ENCODE measurements at regions of chr11 and their contacts with region 1.

Region 1: GRCh38 chr11:114892381-114893197 is 214.3 kb downstream of the NXPE2 start:
- DNase-seq: peak in 1 of 2 experiments; percentile 83
- H3K4me3 ChIP-seq: no peak overlapping the region
- H3K27ac ChIP-seq: no peak overlapping the region
- H3K4me1 ChIP-seq: peaks cover 0 to 6% (median 4%) of the 10 kb centered on the region in 4 experiments; a peak in 3 of 7 replicates
- H3K27me3 ChIP-seq: no peaks in the 10 kb centered on the region
- CTCF ChIP-seq: peak; percentile 51 to 85 (median 59); a peak in 3 of 4 replicates
- EP300 ChIP-seq: no peak
- POLR2A ChIP-seq: no peak
- RAD21 ChIP-seq: peak; percentile 51 to 56

Region 2: DNA sequence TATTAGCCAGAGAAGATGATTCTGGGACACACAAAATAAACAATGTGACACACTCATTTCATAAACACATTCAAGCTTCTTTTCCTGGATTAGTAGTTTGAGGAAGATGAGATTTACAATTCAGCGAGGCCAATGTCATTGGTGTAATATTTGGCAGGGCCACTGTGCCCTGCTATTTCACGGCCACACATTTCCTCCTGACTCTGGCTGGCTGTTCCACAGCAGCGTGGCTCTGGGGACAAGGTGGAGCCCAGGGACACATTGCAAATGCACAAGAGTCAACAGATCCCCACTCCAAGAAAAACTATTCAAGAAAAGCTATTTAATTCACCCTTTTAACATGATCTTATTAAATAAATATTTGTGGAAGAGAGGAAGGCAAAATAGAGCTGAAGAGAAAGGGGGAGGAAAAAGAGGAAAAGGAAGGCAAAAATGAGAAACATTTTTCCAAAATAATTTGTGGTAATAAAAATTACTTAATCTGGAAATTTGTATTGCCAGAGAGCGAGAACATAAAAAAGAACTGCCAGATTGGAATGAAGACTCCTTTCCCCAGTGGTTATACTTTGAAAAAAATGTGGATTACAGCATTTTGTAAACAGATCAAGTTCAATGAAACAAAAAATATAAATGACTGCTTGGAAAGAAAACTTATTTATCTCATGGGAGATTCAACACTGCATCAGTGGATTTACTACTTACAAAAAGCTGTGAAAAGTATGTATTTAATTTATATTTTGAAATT is 187.1 kb before region 1 on chr11:
- CTCF ChIA-PET with region 1: no interaction called
- POLR2A ChIA-PET with region 1: no interaction called
- DNase-seq: no peak
- H3K4me3 ChIP-seq: no peak overlapping the region
- H3K27ac ChIP-seq: no peak overlapping the region
- H3K4me1 ChIP-seq: no peaks in the 10 kb centered on the region
- H3K27me3 ChIP-seq: no peaks in the 10 kb centered on the region
- CTCF ChIP-seq: no peak
- EP300 ChIP-seq: no peak
- POLR2A ChIP-seq: no peak
- RAD21 ChIP-seq: no peak

Region 3: DNA sequence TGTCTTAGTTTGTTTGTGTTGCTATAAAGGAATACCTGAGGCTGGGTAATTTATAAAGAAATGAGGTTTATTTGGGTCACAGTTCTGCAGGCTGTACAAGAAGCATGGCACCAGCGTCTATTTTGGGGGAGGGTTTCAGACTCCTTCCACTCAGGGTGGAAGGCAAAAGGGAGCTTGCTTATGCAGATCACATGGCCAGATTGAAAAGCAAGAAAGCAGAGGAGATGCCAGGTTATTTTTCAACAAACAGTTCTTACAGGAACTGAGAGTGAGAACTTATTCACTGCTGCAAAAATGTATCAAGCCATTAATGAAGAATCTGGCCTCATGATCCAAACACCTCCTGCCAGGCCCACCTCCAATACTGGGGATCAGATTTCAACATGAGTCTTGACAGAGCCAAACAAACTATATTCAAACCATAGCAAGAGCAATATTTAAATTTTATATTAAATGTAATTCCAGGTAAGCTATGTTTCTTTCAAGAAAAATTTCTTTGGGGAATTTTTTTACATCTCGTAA is 147.4 kb before region 1 on chr11:
- CTCF ChIA-PET with region 1: no interaction called
- POLR2A ChIA-PET with region 1: no interaction called
- DNase-seq: no peak
- H3K4me3 ChIP-seq: no peak overlapping the region
- H3K27ac ChIP-seq: no peak overlapping the region
- H3K4me1 ChIP-seq: no peaks in the 10 kb centered on the region
- H3K27me3 ChIP-seq: no peaks in the 10 kb centered on the region
- CTCF ChIP-seq: no peak
- EP300 ChIP-seq: no peak
- POLR2A ChIP-seq: no peak
- RAD21 ChIP-seq: no peak

Region 4: DNA sequence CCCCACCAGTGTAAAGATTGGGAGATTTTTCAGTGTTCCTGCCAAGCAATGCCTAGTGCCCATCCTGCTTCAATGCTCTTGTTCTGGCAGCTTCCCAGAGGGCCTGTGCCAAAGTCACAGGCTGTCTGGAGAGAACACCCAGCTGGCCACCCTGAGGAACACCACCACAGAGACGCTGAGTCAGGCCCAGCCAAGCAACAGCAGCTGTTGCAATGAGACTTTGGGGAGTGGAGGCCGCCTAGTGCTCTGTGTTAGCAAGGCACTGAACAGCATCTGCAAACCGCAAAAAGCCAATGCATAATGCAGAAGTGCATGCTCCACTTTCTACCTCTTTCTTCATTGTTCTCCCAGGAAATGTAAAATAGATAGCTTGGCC is 46.2 kb before region 1 on chr11:
- CTCF ChIA-PET with region 1: interaction called, 15 read pairs
- POLR2A ChIA-PET with region 1: no interaction called
- DNase-seq: no peak
- H3K4me3 ChIP-seq: no peak overlapping the region
- H3K27ac ChIP-seq: no peak overlapping the region
- H3K4me1 ChIP-seq: peaks cover 0 to 9% (median 4%) of the 10 kb centered on the region in 4 experiments; a peak in 4 of 7 replicates
- H3K27me3 ChIP-seq: no peaks in the 10 kb centered on the region
- CTCF ChIP-seq: no peak
- EP300 ChIP-seq: no peak
- POLR2A ChIP-seq: no peak
- RAD21 ChIP-seq: peak in 1 of 2 experiments; percentile 27; a peak in 1 of 4 replicates

Region 5: GRCh38 chr11:114876234-114876633 is 16.4 kb before region 1 on chr11:
- CTCF ChIA-PET with region 1: interaction called, 40 read pairs
- POLR2A ChIA-PET with region 1: no interaction called
- DNase-seq: no peak
- H3K4me3 ChIP-seq: no peak overlapping the region
- H3K27ac ChIP-seq: no peak overlapping the region
- H3K4me1 ChIP-seq: no peaks in the 10 kb centered on the region
- H3K27me3 ChIP-seq: no peaks in the 10 kb centered on the region
- CTCF ChIP-seq: no peak
- EP300 ChIP-seq: no peak
- POLR2A ChIP-seq: no peak
- RAD21 ChIP-seq: no peak

Region 6: DNA sequence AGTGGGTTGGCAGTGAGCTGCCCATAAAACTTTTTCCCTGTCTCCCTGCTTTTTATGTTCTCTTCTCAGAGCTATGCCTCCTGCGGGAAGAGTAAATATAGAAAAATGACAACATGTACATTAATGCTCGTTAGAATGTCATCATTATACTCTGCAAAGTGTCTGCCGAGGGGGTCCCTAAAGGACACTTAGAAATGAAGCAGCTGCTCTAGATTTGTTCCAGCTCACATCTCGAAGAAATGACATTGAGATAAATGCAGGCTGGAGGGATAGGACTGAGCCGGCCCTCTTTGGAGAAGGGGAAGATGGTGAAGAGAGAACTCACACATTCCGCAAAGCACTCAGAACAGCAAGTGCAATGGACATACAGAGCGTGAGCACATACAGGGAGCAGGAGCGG is 25.7 kb after region 1 on chr11:
- CTCF ChIA-PET with region 1: interaction called, 28 read pairs
- POLR2A ChIA-PET with region 1: no interaction called
- DNase-seq: no peak
- H3K4me3 ChIP-seq: no peak overlapping the region
- H3K27ac ChIP-seq: no peak overlapping the region
- H3K4me1 ChIP-seq: no peaks in the 10 kb centered on the region
- H3K27me3 ChIP-seq: no peaks in the 10 kb centered on the region
- CTCF ChIP-seq: no peak
- EP300 ChIP-seq: no peak
- POLR2A ChIP-seq: no peak
- RAD21 ChIP-seq: no peak

Region 7: GRCh38 chr11:114977651-114978050 is 85.1 kb after region 1 on chr11:
- CTCF ChIA-PET with region 1: interaction called, 12 read pairs
- POLR2A ChIA-PET with region 1: no interaction called
- DNase-seq: no peak
- H3K4me3 ChIP-seq: no peak overlapping the region
- H3K27ac ChIP-seq: no peak overlapping the region
- H3K4me1 ChIP-seq: peaks cover 0 to 4% (median 2%) of the 10 kb centered on the region in 4 experiments; a peak in 3 of 7 replicates
- H3K27me3 ChIP-seq: no peaks in the 10 kb centered on the region; a peak in 1 of 7 replicates
- CTCF ChIP-seq: no peak
- EP300 ChIP-seq: no peak
- POLR2A ChIP-seq: no peak
- RAD21 ChIP-seq: no peak

Region 8: GRCh38 chr11:115226556-115226955 is 334.0 kb after region 1 on chr11:
- CTCF ChIA-PET with region 1: no interaction called
- POLR2A ChIA-PET with region 1: no interaction called
- DNase-seq: peak; percentile 53 to 70
- H3K4me3 ChIP-seq: no peak overlapping the region
- H3K27ac ChIP-seq: no peak overlapping the region; the same call in 1 of the 2 replicates
- H3K4me1 ChIP-seq: peaks cover 4 to 13% (median 13%) of the 10 kb centered on the region in 4 experiments
- H3K27me3 ChIP-seq: no peaks in the 10 kb centered on the region
- CTCF ChIP-seq: no peak
- EP300 ChIP-seq: no peak
- POLR2A ChIP-seq: 0 out of 3 replicates have a peak, but pooled peaks of 1 of the 2 experiments have one; percentile 22
- RAD21 ChIP-seq: no peak